Tibial artery (tissue), 4 donors: ENCODE measurements at regions of chr5 and their contacts with region 1.

Region 1: DNA sequence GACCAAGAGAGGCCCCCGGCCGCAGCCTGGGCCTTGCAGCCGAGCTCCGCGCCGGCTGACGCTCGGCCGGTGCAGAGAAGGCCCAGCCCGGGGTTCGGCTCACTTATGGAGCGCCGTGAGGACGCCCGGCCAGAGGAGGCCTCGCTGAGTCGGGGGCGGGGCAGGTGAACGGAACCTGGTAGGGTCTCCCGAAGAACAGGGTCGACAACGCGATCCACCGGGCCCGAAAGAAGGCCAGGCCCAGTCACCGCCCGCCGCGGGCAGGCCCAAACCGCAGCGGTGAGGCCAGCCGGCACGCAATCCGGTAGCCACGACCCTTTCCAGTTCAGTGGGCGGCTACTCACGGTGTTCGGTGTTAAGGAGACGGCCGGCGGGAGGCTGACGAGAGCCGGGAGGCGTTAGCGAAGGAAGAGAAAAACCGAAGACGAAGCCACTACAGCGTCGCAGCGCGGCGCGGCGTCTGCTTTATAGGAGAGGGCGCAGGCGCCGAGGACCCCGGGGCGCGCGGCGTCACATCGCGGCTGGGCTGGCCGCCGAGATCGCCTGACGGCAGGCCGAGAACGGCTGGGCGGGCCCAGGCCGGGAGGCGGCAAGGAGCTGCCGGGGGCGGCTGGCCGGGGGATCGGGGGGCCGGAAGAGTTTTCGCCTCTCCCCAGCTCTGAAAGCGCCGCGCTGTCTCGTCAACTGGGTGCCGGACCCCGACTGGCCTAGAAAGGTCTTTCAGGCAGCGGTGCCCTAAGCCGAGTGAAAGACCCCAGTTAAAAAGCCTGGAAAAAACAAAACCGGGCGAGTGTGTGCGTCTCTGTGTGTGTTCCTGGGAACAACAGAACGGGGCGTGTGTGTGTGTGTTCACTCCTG is at the start of gene SKP1:
- DNase-seq: peak; percentile 69 to 86
- H3K4me3 ChIP-seq: peak within 1 kb of the TSS; percentile 88 to 99
- H3K27ac ChIP-seq: peak within 1 kb of the TSS; percentile 92 to 99
- H3K4me1 ChIP-seq: peaks cover 0 to 41% (median 18%) of the 10 kb centered on the region in 4 donors
- H3K27me3 ChIP-seq: no peaks in the 10 kb centered on the region
- CTCF ChIP-seq: no peak

Region 2: GRCh38 chr5:134225618-134226440 is 49.1 kb after region 1 on chr5 and contains the start of gene PPP2CA:
- intact Hi-C with region 1: loop called (anchors 1 kb)
- DNase-seq: peak; percentile 98 to 99
- H3K4me3 ChIP-seq: peak within 1 kb of the TSS; percentile 93 to 94
- H3K27ac ChIP-seq: peak within 1 kb of the TSS; percentile 99
- H3K4me1 ChIP-seq: peaks cover 0 to 47% (median 18%) of the 10 kb centered on the region in 4 donors
- H3K27me3 ChIP-seq: no peaks in the 10 kb centered on the region
- CTCF ChIP-seq: no peak

Region 3: GRCh38 chr5:134365604-134366003 is 188.9 kb after region 1 on chr5:
- intact Hi-C with region 1: loop called (anchors 5 kb)
- DNase-seq: no peak
- H3K4me3 ChIP-seq: no peak overlapping the region
- H3K27ac ChIP-seq: no peak overlapping the region
- H3K4me1 ChIP-seq: peaks cover 0 to 33% (median 7%) of the 10 kb centered on the region in 4 donors
- H3K27me3 ChIP-seq: no peaks in the 10 kb centered on the region
- CTCF ChIP-seq: no peak

Region 4: GRCh38 chr5:134527146-134527960 is 350.6 kb after region 1 on chr5:
- intact Hi-C with region 1: no loop called
- DNase-seq: peak; percentile 84 to 94
- H3K4me3 ChIP-seq: peak overlapping the region; percentile 75 to 95
- H3K27ac ChIP-seq: peak overlapping the region; percentile 97 to 99
- H3K4me1 ChIP-seq: peaks cover 0 to 56% (median 52%) of the 10 kb centered on the region in 4 donors
- H3K27me3 ChIP-seq: no peaks in the 10 kb centered on the region
- CTCF ChIP-seq: peak; percentile 95 to 99